Activated CD4-positive, alpha-beta T cell treated with anti-CD3 and anti-CD28 coated beads, Interleukin-2, amount 10 ng/mL, durations not matched to agents 24 days and 14 days (primary cell): ENCODE measurements at regions of chr10 and their contacts with region 1.

Region 1: GRCh38 chr10:18625886-18626285 is 25.5 kb downstream of the NSUN6 start:
- DNase-seq: no peak
- H3K4me3 Mint-ChIP-seq: no peak overlapping the region
- H3K27ac Mint-ChIP-seq: no peak overlapping the region
- H3K4me1 Mint-ChIP-seq: peaks cover 11% of the 10 kb centered on the region
- H3K27me3 Mint-ChIP-seq: no peaks in the 10 kb centered on the region

Region 2: DNA sequence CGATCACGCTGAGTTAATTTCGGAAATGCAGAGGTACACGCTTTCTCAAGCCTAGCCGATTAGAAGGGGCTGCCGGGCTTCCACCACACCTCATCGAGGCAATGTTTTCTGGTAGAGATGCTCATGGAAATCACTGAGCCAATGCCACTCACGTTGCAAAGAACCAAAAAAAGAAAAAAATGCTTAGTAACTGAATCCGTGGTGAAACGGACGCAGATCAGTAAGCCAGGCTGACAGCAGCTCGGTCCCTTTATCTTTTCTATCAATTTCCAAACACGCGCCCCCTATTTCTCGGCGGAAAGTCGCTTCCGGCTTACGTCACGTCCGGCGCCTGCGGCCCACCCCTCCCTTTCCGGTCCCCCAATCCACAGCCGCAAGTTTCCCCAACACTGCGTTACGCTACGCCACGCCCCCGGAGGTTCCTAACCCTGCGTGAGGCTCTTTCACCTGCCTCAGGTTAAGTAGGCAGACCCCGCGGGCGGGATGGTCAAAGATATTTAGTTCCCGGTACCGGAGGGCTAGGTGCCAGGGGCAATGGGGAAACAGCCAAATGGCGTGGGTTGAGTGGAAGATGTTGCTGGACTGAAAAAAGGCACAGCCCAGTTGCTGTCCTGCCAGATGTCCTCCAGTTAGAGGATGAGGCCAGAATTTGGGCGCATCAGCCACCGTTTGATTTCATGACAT is 25.6 kb after region 1 on chr10 and contains the start of gene NSUN6:
- intact Hi-C with region 1: loop called (anchors 1 kb)
- DNase-seq: peak; percentile 98
- H3K4me3 Mint-ChIP-seq: peak within 1 kb of the TSS; percentile 95
- H3K27ac Mint-ChIP-seq: peak within 1 kb of the TSS; percentile 95
- H3K4me1 Mint-ChIP-seq: peaks cover 36% of the 10 kb centered on the region
- H3K27me3 Mint-ChIP-seq: peaks cover 2% of the 10 kb centered on the region
- total RNA-seq, gene NSUN6: 15.0 and 17.8 TPM in 2 replicates